ENCODE measurements at regions of chr14 and their contacts with region 1.

Region 1: DNA sequence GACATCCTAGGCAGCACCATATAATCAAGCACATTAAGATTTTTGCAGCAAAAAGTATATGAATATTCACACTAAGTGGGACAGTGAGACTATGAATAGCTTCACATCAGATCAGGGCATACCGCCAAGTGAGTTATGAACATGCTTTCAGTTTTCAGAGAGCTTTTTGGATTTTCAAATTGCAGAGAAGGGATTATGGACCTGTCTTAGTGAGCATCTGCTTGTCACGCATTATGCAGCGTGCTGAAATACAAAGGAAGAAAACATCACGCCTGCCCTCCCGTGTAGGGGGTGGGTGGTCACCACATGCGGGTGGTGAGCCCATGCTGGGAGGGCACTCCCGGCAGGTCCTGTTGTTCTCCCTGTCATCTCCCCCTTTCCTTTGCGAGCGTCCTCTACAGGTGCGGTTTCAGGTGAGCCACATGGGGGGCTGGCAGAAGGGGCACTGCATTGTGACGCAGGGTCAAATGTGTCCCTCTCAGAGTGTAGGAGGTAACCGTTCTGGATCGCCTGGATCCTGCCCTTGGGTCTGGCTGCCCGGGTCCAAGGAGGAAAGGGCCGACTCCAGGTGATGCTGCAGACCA is 42.6 kb downstream of the TRAF3 start:
- DNase-seq: no peak
- ATAC-seq: no peak
- H3K4me3 ChIP-seq: no peak overlapping the region
- H3K27ac ChIP-seq: no peak overlapping the region
- H3K4me1 ChIP-seq: peaks cover 16% of the 10 kb centered on the region
- H3K27me3 ChIP-seq: no peaks in the 10 kb centered on the region
- CTCF ChIP-seq: no peak

Region 2: DNA sequence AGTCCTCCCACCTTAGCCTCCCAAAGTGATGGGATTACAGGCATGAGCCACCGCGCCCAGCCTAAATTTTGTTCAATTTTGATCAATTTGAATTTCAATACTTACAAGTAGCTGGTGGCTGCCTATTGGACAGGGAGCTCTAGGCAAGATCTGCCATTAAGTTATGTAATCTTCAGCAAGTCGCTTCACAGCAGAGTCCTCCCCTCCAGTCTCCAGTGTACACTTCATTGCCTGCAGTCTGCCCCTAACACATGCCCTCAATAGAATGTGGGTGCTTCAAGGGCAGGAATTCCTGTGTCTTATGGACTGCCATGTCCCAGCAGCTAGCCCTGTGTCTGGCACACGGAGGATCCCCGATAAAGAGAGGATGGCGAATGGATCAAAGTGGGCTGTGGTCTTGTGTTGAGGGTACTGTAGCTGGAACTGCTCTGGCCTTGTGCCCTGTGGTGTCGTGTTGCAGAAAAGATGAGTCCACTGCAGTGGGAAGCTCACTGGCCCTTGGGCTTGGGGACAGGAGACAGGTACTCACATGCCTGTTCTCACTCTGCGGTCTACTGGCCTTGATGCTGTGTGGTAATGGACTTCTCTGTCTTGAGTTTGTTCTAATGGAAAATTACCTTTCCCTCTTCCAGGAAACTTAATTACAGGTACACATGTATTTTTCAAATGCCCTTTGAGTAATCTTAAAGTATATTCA is 389.5 kb before region 1 on chr14:
- intact Hi-C with region 1: no loop called
- DNase-seq: no peak
- ATAC-seq: peak in 1 of 4 donors; percentile 28
- H3K4me3 ChIP-seq: no peak overlapping the region
- H3K27ac ChIP-seq: no peak overlapping the region
- H3K4me1 ChIP-seq: no peaks in the 10 kb centered on the region
- H3K27me3 ChIP-seq: no peaks in the 10 kb centered on the region
- CTCF ChIP-seq: no peak

Region 3: DNA sequence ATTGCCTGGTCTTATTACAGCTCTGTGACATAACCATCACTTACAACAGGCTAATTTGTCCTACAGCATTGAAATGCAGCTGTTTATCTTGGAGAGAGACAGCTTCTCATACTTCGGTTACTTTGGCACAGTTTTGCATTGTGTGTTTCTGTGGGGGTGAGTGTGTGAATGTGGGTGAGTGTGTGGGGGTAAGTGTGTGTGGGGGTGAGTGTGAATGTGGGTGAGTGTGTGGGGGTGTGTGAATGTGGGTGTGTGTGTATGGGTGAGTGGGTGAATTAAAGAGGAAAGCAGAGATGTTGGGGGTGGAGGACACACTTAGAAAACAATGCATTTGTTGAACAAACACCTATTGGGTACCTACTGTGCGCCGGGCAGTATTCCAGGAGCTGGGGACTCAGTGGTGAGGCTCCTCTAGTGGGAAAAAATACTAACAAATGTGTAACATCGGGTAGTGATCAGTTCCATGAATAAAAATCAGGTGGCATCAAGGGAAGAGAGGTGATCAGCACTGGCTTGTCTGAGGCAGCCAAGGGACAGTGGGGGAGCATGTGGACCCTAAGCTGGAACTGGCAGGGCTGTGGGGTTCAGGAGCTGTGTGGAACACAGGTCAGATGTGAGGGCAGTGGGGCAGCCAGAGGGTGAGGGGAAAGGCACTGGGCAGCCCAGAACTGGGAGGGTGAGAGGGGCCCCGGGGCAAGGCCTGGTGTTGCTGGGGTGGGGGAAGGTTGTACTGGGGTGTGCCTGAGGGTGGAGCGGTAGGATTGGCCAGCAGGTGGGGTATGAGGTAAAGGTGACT is 58.5 kb after region 1 on chr14:
- intact Hi-C with region 1: loop called in 1 of 2 experiments (anchors 5 kb)
- DNase-seq: no peak
- ATAC-seq: no peak
- H3K4me3 ChIP-seq: no peak overlapping the region
- H3K27ac ChIP-seq: no peak overlapping the region
- H3K4me1 ChIP-seq: peaks cover 13% of the 10 kb centered on the region
- H3K27me3 ChIP-seq: no peaks in the 10 kb centered on the region
- CTCF ChIP-seq: no peak